Left colon (tissue), 2 donors: ENCODE measurements at regions of chr10 and their contacts with region 1.

Region 1: DNA sequence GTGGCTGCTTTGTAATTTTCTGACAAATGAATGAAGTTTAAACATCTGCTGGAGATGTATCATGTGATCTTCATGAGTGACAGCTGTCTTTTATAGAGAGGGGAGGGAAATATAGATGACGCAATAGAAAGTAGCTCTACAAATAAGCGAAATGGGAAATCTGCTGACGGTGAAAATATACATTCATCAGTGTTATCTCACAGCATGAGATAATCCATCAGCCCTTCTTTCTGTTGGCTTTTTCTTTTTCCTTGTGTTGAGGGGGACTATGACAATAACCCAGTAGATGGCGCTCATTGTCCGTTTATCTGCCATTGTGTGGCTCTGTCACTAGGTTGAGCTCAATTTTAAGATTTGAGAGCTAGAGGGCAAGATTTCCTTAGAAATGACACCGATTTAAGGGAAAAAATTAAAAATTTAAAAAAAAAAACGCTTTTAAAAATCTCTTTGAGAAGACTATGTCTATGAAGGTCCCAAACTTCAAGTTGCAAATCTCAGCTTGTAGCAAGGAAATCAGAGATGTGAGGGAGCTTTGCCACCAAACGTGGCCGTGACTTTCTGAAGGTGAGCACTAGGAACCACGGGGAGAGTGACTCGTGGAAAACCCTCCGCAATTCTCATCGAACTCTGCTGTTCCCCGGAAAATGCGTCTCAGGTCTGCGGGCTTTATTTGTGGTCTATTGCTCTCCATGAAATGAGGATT is 114.6 kb upstream of the SFMBT2 start:
- DNase-seq: peak in 1 of 2 donors; percentile 56
- ATAC-seq: peak; percentile 66

Region 2: DNA sequence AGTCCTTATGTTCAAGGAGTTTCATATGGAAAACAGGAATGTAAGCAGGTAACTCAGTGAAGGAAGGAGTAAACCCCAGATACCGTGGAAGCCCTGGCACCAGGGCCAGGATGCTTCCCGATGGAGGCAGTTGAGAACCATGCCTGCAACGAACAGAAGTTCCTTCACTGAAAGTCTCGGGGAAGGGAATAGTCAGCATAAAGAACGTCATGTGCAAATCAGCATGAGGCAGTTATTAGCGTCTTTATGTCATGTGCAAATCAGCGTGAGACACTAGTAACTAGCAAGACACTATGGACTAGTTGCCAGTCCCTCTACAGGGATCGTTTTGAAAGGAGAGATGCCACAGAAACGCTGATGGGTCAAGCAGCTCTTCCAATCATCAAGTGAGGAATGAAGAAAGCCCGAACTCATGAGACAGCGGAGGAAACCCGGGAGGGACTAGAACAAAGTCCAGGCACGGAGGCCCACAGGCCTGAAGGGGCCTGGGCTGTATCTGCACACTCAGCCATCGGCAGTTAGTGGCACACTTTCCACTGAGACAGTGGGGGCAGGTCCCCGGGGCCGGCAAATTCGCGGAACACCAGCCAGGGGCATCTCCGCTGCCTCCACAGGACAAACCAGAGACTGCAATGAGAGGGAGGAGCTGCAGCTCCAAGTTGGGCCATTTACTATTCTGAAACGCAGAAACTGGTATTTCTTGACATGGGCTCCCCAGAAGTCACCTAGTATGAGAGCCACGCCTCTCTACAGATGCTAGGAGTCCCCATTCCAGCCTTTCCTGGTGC is 224.3 kb before region 1 on chr10:
- intact Hi-C with region 1: no loop called
- DNase-seq: no peak
- ATAC-seq: no peak

Region 3: DNA sequence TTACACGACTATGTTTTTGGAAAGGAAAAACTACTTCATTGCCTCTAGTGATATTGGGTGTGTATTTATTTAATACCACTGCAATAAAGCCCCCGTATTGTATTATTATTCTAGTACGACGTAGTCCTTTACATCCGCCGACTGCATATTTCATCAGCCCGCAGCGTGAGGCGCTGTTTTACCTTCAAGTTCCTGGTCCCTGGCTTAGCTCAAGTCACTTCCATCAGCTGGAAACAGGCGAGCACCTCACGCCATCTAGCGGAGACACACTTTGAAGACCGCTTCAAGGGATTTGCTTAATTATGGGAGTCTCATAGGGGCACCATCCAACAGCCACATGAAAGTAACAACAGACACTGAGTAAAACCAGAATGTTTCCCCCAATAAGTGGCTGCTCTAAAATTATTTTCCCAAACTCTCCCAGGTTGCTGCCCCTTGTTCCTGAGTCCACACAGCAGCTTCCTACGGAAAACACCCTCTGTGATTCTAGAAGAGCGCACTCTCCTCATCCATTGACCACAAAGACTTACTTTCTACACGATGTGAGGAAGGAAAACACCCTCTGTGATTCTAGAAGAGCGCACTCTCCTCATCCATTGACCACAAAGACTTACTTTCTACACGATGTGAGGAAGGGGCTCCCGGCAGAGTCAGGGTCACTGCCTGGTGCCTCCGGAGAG is 161.9 kb after region 1 on chr10:
- intact Hi-C with region 1: loop called (anchors 2 to 10 kb)
- DNase-seq: peak; percentile 76 to 81
- ATAC-seq: peak; percentile 89

Region 4: GRCh38 chr10:7756360-7756992 is 231.0 kb after region 1 on chr10:
- intact Hi-C with region 1: no loop called
- DNase-seq: peak; percentile 35 to 48
- ATAC-seq: peak; percentile 99